ENCODE measurements at regions of chr14 and their contacts with region 1.

Region 1: DNA sequence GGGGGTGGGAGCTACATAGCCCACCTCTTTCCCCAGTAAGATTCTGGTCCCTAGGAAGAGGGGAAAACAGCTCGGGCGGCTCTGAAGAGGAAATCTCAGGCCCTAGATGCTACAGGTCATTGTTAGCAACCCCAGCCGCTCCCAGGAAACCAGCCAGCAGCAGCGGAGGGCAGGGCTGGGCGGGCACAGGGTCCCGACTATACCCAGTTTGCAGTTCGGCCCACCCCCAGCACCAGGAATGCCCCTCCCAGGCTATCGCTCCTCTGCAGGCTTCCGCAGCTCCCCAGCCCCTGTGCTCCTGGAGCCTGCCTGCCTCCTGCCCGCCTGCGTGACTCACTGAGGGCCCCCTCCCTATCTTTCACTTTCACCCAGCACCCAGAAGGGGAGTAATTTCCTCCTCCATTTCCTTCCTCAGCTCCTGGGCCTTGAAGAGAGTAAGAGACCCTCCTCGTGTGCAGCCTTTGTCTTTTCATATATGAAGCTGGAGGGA is 27.2 kb upstream of the PNMA1 start:
- DNase-seq: peak; percentile 56 to 87 (median 62)
- H3K4me3 ChIP-seq: peak overlapping the region; percentile 36 to 49
- H3K4me3 Mint-ChIP-seq: peak overlapping the region; percentile 79 to 90 (median 86)
- H3K27ac ChIP-seq: peak overlapping the region; percentile 66
- H3K27ac Mint-ChIP-seq: peak overlapping the region; percentile 93 to 98 (median 95)
- H3K4me1 ChIP-seq: peaks cover 77% of the 10 kb centered on the region
- H3K4me1 Mint-ChIP-seq: peaks cover 50 to 73% (median 61%) of the 10 kb centered on the region in 4 donors
- H3K27me3 ChIP-seq: no peaks in the 10 kb centered on the region
- H3K27me3 Mint-ChIP-seq: no peaks in the 10 kb centered on the region

Region 2: DNA sequence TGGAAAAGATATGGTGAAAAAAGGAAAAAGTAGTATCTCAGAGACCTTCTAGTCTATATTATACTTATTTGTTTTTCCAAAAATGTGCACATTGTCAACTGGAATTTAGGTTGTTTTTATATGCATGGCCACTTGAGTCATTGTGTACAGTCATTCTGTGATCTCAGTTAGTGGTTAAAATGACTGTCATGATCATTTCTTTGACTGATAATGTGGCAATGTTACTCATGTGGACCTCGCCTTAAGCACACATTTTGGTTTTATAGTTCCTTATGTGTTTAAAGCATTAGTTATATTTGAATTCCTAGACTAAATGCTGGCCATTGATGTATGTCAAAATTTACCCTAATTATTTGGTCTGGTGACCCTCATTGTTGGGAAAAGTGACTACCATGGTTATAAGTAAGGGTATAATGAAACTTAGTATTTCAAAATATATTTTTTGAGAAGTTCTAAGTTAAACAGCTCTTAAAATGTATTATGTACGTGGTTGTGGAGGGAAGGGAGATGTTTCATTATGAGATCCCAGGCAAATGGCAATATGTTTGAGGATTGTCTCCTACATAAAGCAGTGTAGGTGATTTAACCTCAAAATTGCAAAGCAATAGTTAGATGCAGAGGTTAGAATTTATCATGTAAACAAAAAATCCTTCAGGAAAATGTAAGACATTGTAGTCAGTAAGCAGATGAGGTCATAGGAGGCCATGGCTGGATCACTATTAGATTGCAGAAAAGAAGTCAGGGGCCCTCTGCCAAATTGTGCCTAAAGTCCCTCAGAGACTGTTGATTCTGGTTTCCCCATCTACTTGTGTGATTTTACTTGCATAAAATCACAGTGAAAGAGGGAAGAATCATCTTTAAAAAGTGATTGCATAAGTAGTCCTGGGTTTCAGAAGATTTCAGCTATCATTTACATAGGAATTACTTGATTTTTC is 44.7 kb before region 1 on chr14:
- CTCF ChIA-PET with region 1: no interaction called
- POLR2A ChIA-PET with region 1: no interaction called
- intact Hi-C with region 1: no loop called
- DNase-seq: no peak
- H3K4me3 ChIP-seq: no peak overlapping the region
- H3K4me3 Mint-ChIP-seq: no peak overlapping the region
- H3K27ac ChIP-seq: no peak overlapping the region
- H3K27ac Mint-ChIP-seq: no peak overlapping the region
- H3K4me1 ChIP-seq: no peaks in the 10 kb centered on the region
- H3K4me1 Mint-ChIP-seq: peaks cover 0 to 1% (median 0%) of the 10 kb centered on the region in 4 donors
- H3K27me3 ChIP-seq: no peaks in the 10 kb centered on the region
- H3K27me3 Mint-ChIP-seq: no peaks in the 10 kb centered on the region

Region 3: GRCh38 chr14:73771848-73772638 is 30.6 kb after region 1 on chr14:
- CTCF ChIA-PET with region 1: interaction called, 20 read pairs
- POLR2A ChIA-PET with region 1: interaction called, 23 read pairs
- intact Hi-C with region 1: no loop called
- DNase-seq: peak; percentile 55 to 84 (median 61)
- H3K4me3 ChIP-seq: no peak overlapping the region
- H3K4me3 Mint-ChIP-seq: peak overlapping the region; percentile 55 to 88 (median 62)
- H3K27ac ChIP-seq: peak overlapping the region; percentile 50
- H3K27ac Mint-ChIP-seq: peak overlapping the region; percentile 83 to 96 (median 93)
- H3K4me1 ChIP-seq: peaks cover 78% of the 10 kb centered on the region
- H3K4me1 Mint-ChIP-seq: peaks cover 51 to 83% (median 66%) of the 10 kb centered on the region in 4 donors
- H3K27me3 ChIP-seq: no peaks in the 10 kb centered on the region
- H3K27me3 Mint-ChIP-seq: no peaks in the 10 kb centered on the region

Region 4: GRCh38 chr14:73997108-73997943 is 255.9 kb after region 1 on chr14:
- CTCF ChIA-PET with region 1: no interaction called
- POLR2A ChIA-PET with region 1: no interaction called
- intact Hi-C with region 1: no loop called
- DNase-seq: no peak
- H3K4me3 ChIP-seq: no peak overlapping the region
- H3K4me3 Mint-ChIP-seq: no peak overlapping the region
- H3K27ac ChIP-seq: no peak overlapping the region
- H3K27ac Mint-ChIP-seq: no peak overlapping the region
- H3K4me1 ChIP-seq: no peaks in the 10 kb centered on the region
- H3K4me1 Mint-ChIP-seq: peaks cover 0 to 3% (median 0%) of the 10 kb centered on the region in 4 donors
- H3K27me3 ChIP-seq: no peaks in the 10 kb centered on the region
- H3K27me3 Mint-ChIP-seq: no peaks in the 10 kb centered on the region